ENCODE measurements at regions of chr11 and their contacts with region 1.

Region 1: DNA sequence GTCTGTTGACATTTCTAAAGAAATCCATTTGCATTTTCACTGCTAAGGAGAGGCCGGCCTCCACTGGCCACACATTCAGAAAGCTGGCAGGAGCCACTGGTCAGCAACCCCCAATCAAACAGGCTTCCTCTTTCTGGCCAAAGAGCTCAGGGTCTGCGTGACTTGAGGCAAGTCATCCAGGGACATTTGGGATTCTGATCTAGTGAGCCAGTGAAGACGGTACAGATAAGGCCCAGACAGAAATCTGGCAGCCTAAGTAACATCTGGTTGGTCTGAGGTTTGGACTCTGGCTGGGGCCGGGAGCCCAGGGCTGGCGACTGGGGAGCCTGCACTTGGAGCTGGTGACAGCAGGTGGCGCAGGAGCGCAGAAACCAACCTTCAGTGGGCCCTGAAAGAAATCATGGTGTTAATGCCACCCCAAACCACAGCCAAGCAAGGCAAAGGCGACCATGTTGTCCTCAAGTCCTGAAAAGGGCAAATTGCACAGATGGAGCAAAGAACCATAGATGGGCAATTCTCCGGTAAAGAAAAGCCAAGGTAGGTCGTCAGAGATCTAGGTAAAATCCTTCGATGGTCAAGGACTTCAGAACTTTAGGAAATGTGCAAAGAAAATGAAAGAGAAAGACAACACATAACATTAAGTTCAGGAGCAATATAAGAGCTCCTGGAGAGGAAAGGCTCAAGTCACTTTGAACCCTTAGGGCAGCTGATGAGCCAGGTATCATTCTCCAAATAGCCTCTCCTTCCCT is 99.4 kb upstream of the BLID start:
- DNase-seq: peak; percentile 79
- H3K4me3 ChIP-seq: no peak overlapping the region
- H3K27ac ChIP-seq: no peak overlapping the region
- H3K4me1 ChIP-seq: peaks cover 6% of the 10 kb centered on the region
- H3K27me3 ChIP-seq: peaks cover 0 to 3% of the 10 kb centered on the region in 2 experiments
- CTCF ChIP-seq: peak; percentile 96 to 98
- POLR2A ChIP-seq: no peak

Region 2: GRCh38 chr11:122020902-122021301 is 194.5 kb before region 1 on chr11:
- CTCF ChIA-PET with region 1: interaction called, 11 read pairs
- POLR2A ChIA-PET with region 1: no interaction called
- dilution Hi-C with region 1: no loop called
- intact Hi-C with region 1: no loop called
- DNase-seq: peak; percentile 46
- H3K4me3 ChIP-seq: no peak overlapping the region
- H3K27ac ChIP-seq: no peak overlapping the region
- H3K4me1 ChIP-seq: no peaks in the 10 kb centered on the region
- H3K27me3 ChIP-seq: no peaks in the 10 kb centered on the region
- CTCF ChIP-seq: peak; percentile 38 to 57
- POLR2A ChIP-seq: no peak

Region 3: DNA sequence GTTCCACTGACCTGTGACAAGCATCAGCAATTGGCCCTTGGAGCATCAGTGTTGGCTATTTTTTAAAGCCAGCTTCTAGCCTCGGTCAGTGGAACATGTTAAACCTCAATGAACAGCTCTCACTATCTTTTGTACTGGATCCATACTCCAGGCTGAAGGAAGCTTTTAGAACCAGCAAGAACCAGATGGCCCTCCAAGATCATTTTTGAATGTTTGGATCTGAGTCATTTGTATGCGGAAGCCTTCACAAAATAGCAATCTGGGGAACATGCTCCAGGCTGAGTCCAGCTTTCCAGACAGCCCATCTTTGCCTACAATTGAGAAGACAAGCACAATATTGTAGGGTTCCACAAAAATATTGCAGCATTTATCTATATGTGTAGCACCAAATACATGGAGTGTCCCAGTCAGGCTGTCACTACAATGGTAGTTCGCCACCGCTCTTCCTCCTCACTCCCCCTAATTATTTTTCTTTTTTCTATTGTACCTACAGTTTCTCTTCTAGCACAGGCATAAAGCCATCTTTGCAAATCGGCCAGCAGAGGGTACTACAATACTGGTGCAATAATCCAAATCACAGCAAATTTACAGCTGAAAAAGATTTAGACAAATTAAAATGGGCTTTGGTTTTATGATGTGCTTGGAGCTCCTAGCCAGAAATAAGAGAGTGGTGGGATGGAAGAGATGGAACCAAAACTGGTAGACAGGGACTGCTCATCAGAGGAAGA is 78.0 kb after region 1 on chr11:
- CTCF ChIA-PET with region 1: no interaction called
- POLR2A ChIA-PET with region 1: no interaction called
- dilution Hi-C with region 1: no loop called
- intact Hi-C with region 1: loop called (anchors 5 kb)
- DNase-seq: no peak
- H3K4me3 ChIP-seq: no peak overlapping the region
- H3K27ac ChIP-seq: no peak overlapping the region
- H3K4me1 ChIP-seq: no peaks in the 10 kb centered on the region
- H3K27me3 ChIP-seq: peaks cover 0 to 3% of the 10 kb centered on the region in 2 experiments
- CTCF ChIP-seq: no peak
- POLR2A ChIP-seq: no peak

Region 4: DNA sequence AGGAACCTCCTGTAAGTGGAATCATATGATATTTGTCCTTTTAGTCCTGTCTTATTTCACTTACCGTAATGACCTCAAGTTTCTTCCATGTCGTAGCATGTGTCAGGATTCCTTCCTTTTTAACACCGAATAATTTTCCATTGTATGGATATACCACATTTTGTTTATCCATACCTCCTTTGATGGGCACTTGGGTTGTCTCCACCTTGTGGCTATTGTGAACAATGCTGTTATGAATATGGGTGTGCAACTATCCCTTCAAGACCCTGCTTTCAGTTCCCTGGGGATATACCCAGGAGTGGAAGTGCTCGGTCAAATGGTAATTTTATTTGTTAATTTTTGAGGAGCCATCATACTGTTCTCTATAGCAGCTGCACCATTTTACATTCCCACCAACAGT is 145.5 kb after region 1 on chr11:
- CTCF ChIA-PET with region 1: interaction called, 3 read pairs
- POLR2A ChIA-PET with region 1: no interaction called
- dilution Hi-C with region 1: no loop called
- intact Hi-C with region 1: loop called (anchors 2 kb)
- DNase-seq: no peak
- H3K4me3 ChIP-seq: no peak overlapping the region
- H3K27ac ChIP-seq: no peak overlapping the region
- H3K4me1 ChIP-seq: no peaks in the 10 kb centered on the region
- H3K27me3 ChIP-seq: no peaks in the 10 kb centered on the region
- CTCF ChIP-seq: no peak
- POLR2A ChIP-seq: no peak

Region 5: DNA sequence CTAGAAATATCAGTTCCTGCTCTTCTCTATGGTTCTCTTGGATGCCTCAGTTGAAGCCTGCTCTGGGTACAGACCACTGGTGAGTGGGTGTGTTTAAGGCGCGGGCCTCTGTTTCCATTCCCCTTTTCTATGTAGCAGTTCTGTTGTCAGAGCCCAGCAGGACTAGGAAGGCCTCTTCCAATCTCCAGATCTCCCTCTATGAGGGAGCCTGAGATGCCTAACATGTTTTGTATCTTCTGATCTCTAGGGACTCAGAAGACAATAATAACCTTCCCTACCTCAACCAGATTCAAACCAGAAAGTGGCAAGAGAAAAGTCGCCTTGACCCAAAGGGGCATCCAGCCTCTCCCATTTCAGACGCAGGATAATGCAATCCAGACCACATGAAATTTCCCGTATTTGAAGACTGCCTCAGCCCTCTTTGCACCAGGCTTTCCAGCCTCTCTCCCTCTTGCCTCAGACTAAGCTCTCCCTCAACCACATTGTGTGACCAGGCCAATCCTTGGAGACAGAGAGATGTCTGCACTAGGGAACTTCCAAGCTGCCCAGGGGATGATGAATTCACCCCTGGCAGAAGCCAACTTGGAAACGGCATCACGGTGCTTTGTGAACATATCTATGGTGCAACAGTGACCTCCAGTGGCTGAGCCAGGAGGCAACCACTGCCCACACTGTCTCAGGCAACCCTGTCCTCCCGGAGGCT is 290.0 kb after region 1 on chr11:
- CTCF ChIA-PET with region 1: interaction called, 119 read pairs
- POLR2A ChIA-PET with region 1: no interaction called
- dilution Hi-C with region 1: no loop called
- intact Hi-C with region 1: loop called (anchors 1 kb)
- DNase-seq: peak; percentile 77
- H3K4me3 ChIP-seq: no peak overlapping the region
- H3K27ac ChIP-seq: no peak overlapping the region
- H3K4me1 ChIP-seq: no peaks in the 10 kb centered on the region
- H3K27me3 ChIP-seq: peaks cover 2 to 6% of the 10 kb centered on the region in 2 experiments
- CTCF ChIP-seq: peak; percentile 83 to 84
- POLR2A ChIP-seq: no peak

Region 6: GRCh38 chr11:122578168-122578825 is 362.9 kb after region 1 on chr11:
- CTCF ChIA-PET with region 1: interaction called, 3 read pairs
- POLR2A ChIA-PET with region 1: no interaction called
- dilution Hi-C with region 1: no loop called
- intact Hi-C with region 1: loop called (anchors 1 kb)
- DNase-seq: no peak
- H3K4me3 ChIP-seq: no peak overlapping the region
- H3K27ac ChIP-seq: no peak overlapping the region
- H3K4me1 ChIP-seq: no peaks in the 10 kb centered on the region
- H3K27me3 ChIP-seq: no peaks in the 10 kb centered on the region
- CTCF ChIP-seq: no peak
- POLR2A ChIP-seq: no peak

Measured in endothelial cell of umbilical vein (primary cell).